ENCODE measurements at regions of chr15 and their contacts with region 1.

Region 1: GRCh38 chr15:63093486-63094205 is 28.0 kb upstream of the LACTB start:
- DNase-seq: peak; percentile 65
- ATAC-seq: peak; percentile 100
- H3K4me3 ChIP-seq: no peak overlapping the region
- H3K27ac ChIP-seq: no peak overlapping the region
- H3K4me1 ChIP-seq: no peaks in the 10 kb centered on the region
- H3K27me3 ChIP-seq: no peaks in the 10 kb centered on the region
- CTCF ChIP-seq: peak; percentile 84 to 94 (median 89)
- POLR2A ChIP-seq: no peak
- RAD21 ChIP-seq: peak; percentile 96

Region 2: GRCh38 chr15:62782039-62782791 is 311.4 kb before region 1 on chr15:
- CTCF ChIA-PET with region 1: interaction called, 13 read pairs
- POLR2A ChIA-PET with region 1: no interaction called
- RAD21 ChIA-PET with region 1: interaction called, 3 read pairs
- intact Hi-C with region 1: loop called (anchors 1 kb)
- DNase-seq: peak; percentile 56
- ATAC-seq: peak; percentile 98
- H3K4me3 ChIP-seq: no peak overlapping the region
- H3K27ac ChIP-seq: no peak overlapping the region
- H3K4me1 ChIP-seq: no peaks in the 10 kb centered on the region; a peak in 1 of 4 replicates
- H3K27me3 ChIP-seq: no peaks in the 10 kb centered on the region
- CTCF ChIP-seq: peak; percentile 63 to 76 (median 74); a peak in 5 of 6 replicates
- POLR2A ChIP-seq: no peak
- RAD21 ChIP-seq: peak; percentile 89

Region 3: GRCh38 chr15:62847900-62848489 is 245.7 kb before region 1 on chr15:
- CTCF ChIA-PET with region 1: interaction called, 26 read pairs
- POLR2A ChIA-PET with region 1: no interaction called
- RAD21 ChIA-PET with region 1: no interaction called
- intact Hi-C with region 1: loop called (anchors 1 kb)
- DNase-seq: peak; percentile 53
- ATAC-seq: peak; percentile 91
- H3K4me3 ChIP-seq: no peak overlapping the region
- H3K27ac ChIP-seq: no peak overlapping the region
- H3K4me1 ChIP-seq: peaks cover 0 to 12% of the 10 kb centered on the region in 2 experiments; a peak in 2 of 4 replicates
- H3K27me3 ChIP-seq: no peaks in the 10 kb centered on the region
- CTCF ChIP-seq: peak; percentile 83 to 93 (median 87)
- POLR2A ChIP-seq: no peak
- RAD21 ChIP-seq: peak; percentile 88

Region 4: DNA sequence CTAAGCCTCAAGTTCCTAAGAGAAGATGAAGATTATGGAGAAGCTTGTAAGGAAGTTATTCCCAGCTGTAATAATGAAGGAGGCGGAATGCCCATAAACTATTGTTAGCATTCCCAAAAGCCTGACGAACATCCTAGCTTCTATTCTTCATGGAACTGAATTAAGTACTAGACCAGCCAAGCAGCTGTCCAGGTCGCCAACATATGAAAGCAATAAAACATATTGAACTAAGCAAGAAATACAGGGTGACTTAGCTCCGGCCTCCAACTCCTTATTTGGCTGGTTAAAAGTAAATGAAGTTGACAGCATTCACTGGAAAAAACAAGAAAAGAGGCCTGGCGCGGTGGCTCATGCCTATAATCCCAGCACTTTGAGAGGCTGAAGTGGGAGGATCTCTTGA is 225.1 kb before region 1 on chr15:
- CTCF ChIA-PET with region 1: no interaction called
- POLR2A ChIA-PET with region 1: no interaction called
- RAD21 ChIA-PET with region 1: no interaction called
- intact Hi-C with region 1: no loop called
- DNase-seq: no peak
- ATAC-seq: no peak
- H3K4me3 ChIP-seq: no peak overlapping the region
- H3K27ac ChIP-seq: no peak overlapping the region
- H3K4me1 ChIP-seq: no peaks in the 10 kb centered on the region
- H3K27me3 ChIP-seq: no peaks in the 10 kb centered on the region
- CTCF ChIP-seq: no peak
- POLR2A ChIP-seq: no peak
- RAD21 ChIP-seq: no peak

Measured in HCT116 (cell line).